Vagina (tissue), 2 donors: ENCODE measurements at regions of chr6 and their contacts with region 1.

Region 1: GRCh38 chr6:72411872-72412708 is 209.8 kb upstream of the KCNQ5 start:
- DNase-seq: no peak
- H3K4me3 ChIP-seq: no peak overlapping the region
- H3K27ac ChIP-seq: no peak overlapping the region
- H3K4me1 ChIP-seq: no peaks in the 10 kb centered on the region
- H3K27me3 ChIP-seq: no peaks in the 10 kb centered on the region
- CTCF ChIP-seq: peak; percentile 99
- POLR2A ChIP-seq: no peak

Region 2: DNA sequence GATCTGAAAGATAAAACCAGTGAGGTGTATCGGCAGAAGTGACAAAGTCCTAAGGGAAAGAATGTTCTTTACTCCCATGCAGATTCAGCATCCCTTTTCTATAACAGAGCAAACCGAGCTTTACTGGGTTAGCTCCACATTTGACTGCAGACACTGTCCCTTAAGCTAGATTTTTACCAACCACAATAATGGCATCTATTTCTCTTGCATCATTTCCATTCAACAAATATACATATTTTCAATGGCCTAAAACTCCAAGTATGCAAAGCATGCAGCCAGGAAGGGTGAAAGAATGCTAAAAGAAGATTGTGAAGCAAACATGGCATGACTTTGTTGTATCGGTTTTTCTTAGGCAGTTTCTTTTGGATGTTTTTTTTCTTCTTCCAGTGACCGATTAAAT is 868.1 kb before region 1 on chr6:
- intact Hi-C with region 1: no loop called
- DNase-seq: no peak
- H3K4me3 ChIP-seq: no peak overlapping the region
- H3K27ac ChIP-seq: no peak overlapping the region
- H3K4me1 ChIP-seq: no peaks in the 10 kb centered on the region
- H3K27me3 ChIP-seq: no peaks in the 10 kb centered on the region
- CTCF ChIP-seq: no peak
- POLR2A ChIP-seq: no peak

Region 3: DNA sequence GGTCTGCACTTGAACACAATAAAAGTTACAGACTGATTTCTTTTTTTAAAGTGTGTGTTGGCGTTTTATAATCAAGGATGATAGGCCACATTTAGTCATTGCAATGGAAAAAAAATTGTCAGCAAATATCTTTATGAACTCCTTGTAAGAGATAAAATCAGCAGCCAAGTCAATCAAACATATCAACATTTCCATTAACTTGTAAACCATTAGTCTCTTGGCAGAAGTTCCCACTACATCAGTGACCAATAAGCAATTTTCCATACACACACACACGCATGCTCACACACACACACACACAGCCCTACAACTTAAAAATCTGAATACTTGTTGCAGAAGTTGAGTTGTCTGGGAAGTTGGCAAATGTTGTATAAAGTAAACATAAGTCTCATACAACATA is 106.1 kb before region 1 on chr6:
- intact Hi-C with region 1: no loop called
- DNase-seq: no peak
- H3K4me3 ChIP-seq: no peak overlapping the region
- H3K27ac ChIP-seq: no peak overlapping the region
- H3K4me1 ChIP-seq: no peaks in the 10 kb centered on the region
- H3K27me3 ChIP-seq: no peaks in the 10 kb centered on the region
- CTCF ChIP-seq: no peak
- POLR2A ChIP-seq: no peak

Region 4: GRCh38 chr6:72328775-72329174 is 83.3 kb before region 1 on chr6:
- intact Hi-C with region 1: no loop called
- DNase-seq: no peak
- H3K4me3 ChIP-seq: no peak overlapping the region
- H3K27ac ChIP-seq: no peak overlapping the region
- H3K4me1 ChIP-seq: no peaks in the 10 kb centered on the region
- H3K27me3 ChIP-seq: no peaks in the 10 kb centered on the region
- CTCF ChIP-seq: no peak
- POLR2A ChIP-seq: no peak

Region 5: DNA sequence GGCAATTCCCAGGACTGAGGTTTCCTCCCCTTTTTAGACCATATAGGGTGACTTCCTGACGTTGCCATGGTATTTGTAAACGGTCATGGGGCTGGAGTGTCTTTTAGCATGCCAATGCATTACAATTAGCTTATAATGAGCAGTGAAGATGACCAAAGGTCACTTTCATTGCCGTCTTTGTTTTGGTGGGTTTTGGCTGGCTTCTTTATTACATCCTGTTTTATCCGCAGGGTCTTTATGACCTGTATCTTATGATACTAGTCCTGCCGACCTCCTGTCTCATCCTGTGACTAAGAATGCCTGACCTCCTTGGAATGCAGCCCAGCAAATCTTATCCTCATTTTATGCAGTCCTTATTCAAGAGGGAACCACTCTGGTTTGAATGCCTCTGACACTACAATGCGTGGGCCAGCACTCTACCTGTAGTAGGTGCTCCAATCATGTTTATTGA is 399.9 kb after region 1 on chr6:
- intact Hi-C with region 1: no loop called
- DNase-seq: no peak
- H3K4me3 ChIP-seq: no peak overlapping the region
- H3K27ac ChIP-seq: no peak overlapping the region
- H3K4me1 ChIP-seq: no peaks in the 10 kb centered on the region
- H3K27me3 ChIP-seq: no peaks in the 10 kb centered on the region
- CTCF ChIP-seq: no peak
- POLR2A ChIP-seq: no peak

Region 6: DNA sequence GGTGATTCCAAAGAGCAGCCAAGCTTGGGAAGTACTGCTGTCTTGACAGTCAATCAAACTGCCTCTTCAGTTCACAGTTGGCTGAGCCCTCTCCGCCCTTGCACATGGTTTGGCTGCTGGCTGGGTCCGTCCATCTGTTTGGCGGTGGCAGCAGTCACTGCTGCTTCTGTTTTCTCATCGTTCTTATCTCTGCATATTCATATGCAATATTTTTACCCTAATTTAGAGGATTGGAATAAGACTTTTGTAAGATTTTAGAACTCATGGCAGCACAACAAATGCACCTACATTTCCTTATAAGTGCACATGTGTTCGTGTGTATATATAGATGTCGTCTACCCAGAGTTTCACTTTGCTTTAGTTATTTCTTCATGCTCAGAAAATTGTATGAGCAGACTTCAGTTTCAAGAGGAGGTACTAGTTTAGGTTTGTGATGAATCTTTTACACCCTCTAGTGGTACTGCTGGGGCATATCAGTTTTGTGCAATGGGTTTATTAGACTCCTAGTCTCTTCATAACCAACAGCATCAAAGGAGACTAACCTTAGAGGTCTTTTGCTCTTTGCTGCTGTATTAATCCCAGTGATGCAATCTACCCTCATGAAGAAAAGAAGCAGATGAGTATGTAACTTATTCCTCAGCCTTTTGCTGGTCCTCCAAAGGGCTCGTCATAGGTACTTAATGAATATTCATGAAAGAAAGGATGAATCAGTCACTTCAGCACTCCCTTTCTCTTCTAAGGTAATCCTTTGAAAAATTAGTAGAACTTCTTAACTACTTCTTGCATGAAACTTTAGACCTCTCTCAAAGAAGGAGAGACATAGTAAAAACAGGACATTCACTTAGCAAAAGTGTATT is 768.9 kb after region 1 on chr6:
- intact Hi-C with region 1: loop called (anchors 10 kb)
- DNase-seq: no peak
- H3K4me3 ChIP-seq: peak overlapping the region; percentile 1 to 27
- H3K27ac ChIP-seq: no peak overlapping the region
- H3K4me1 ChIP-seq: no peaks in the 10 kb centered on the region
- H3K27me3 ChIP-seq: no peaks in the 10 kb centered on the region
- CTCF ChIP-seq: peak in 2 of 3 experiments; percentile 33 to 58
- POLR2A ChIP-seq: no peak